PC-3 (cell line): ENCODE measurements at regions of chr13 and their contacts with region 1.

Region 1: GRCh38 chr13:106536244-106537034 is 977 bp upstream of the EFNB2 start:
- DNase-seq: peak; percentile 85
- ATAC-seq: peak; percentile 27
- H3K4me3 ChIP-seq: peak overlapping the region; percentile 79
- H3K27ac ChIP-seq: no peak overlapping the region
- H3K4me1 ChIP-seq: peaks cover 6% of the 10 kb centered on the region; the same call in 1 of the 2 replicates
- H3K27me3 ChIP-seq: no peaks in the 10 kb centered on the region
- CTCF ChIP-seq: peak; percentile 89

Region 2: DNA sequence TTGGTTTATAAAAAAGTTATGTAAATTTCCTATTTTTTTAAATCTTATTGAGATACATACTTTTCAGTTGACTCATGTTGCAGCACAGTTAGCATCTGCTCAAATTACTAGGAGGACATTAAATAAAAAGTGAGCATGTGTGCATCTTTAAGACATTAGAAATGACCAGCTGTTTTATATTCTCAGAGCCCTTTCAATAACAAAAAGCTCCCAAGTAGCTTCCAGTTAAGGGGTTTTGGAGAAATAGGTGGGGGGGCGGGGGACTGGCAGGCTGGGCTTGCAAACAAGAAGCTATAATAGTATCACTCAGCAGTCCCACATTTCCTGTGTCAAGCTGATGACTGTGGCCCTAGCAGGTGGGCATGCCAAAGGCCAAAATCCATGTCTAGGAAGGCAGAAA is 1757.1 kb before region 1 on chr13:
- CTCF ChIA-PET with region 1: no interaction called
- POLR2A ChIA-PET with region 1: no interaction called
- intact Hi-C with region 1: loop called (anchors 2 kb)
- DNase-seq: peak; percentile 36
- ATAC-seq: peak; percentile 83
- H3K4me3 ChIP-seq: no peak overlapping the region
- H3K27ac ChIP-seq: no peak overlapping the region
- H3K4me1 ChIP-seq: peaks cover 10% of the 10 kb centered on the region; the same call in 1 of the 2 replicates
- H3K27me3 ChIP-seq: no peaks in the 10 kb centered on the region
- CTCF ChIP-seq: no peak

Region 3: DNA sequence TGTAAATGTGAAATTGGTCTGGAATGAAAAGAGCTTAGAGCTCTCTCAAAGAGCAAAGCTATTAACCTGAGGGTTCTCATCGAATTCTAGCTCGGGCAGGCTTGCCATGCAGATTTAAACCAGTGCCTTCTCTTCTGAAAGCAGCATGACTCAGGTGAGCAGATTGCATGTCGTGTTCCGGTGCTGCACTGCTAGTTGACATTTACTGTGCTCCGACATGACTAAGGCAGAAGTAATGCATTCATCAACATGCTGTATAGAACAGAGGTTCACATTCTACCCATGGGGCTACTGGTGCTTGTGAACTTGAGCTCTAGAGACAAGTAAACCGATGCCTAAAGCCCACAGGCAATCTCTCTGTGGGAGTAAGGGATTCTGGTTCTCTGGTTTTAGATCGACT is 948.7 kb before region 1 on chr13:
- CTCF ChIA-PET with region 1: no interaction called
- POLR2A ChIA-PET with region 1: no interaction called
- intact Hi-C with region 1: loop called (anchors 10 kb)
- DNase-seq: peak; percentile 91
- ATAC-seq: peak; percentile 100
- H3K4me3 ChIP-seq: no peak overlapping the region
- H3K27ac ChIP-seq: peak overlapping the region; percentile 57
- H3K4me1 ChIP-seq: peaks cover 13% of the 10 kb centered on the region
- H3K27me3 ChIP-seq: no peaks in the 10 kb centered on the region
- CTCF ChIP-seq: no peak

Region 4: GRCh38 chr13:106083620-106084350 is 452.7 kb before region 1 on chr13:
- CTCF ChIA-PET with region 1: no interaction called
- POLR2A ChIA-PET with region 1: no interaction called
- intact Hi-C with region 1: loop called (anchors 5 kb)
- DNase-seq: peak; percentile 72
- ATAC-seq: peak; percentile 67
- H3K4me3 ChIP-seq: no peak overlapping the region
- H3K27ac ChIP-seq: 0 out of 2 replicates have a peak overlapping the region, but pooled peaks have one; percentile 4
- H3K4me1 ChIP-seq: peaks cover 13% of the 10 kb centered on the region
- H3K27me3 ChIP-seq: no peaks in the 10 kb centered on the region
- CTCF ChIP-seq: peak; percentile 83

Region 5: GRCh38 chr13:106143930-106144709 is 392.3 kb before region 1 on chr13:
- CTCF ChIA-PET with region 1: no interaction called
- POLR2A ChIA-PET with region 1: no interaction called
- intact Hi-C with region 1: loop called (anchors 2 kb)
- DNase-seq: peak; percentile 88
- ATAC-seq: peak; percentile 48
- H3K4me3 ChIP-seq: no peak overlapping the region
- H3K27ac ChIP-seq: peak overlapping the region; percentile 88
- H3K4me1 ChIP-seq: peaks cover 41% of the 10 kb centered on the region
- H3K27me3 ChIP-seq: no peaks in the 10 kb centered on the region
- CTCF ChIP-seq: no peak

Region 6: GRCh38 chr13:106525863-106526262 is 10.6 kb before region 1 on chr13:
- CTCF ChIA-PET with region 1: no interaction called
- POLR2A ChIA-PET with region 1: no interaction called
- intact Hi-C with region 1: no loop called
- DNase-seq: no peak
- ATAC-seq: no peak
- H3K4me3 ChIP-seq: no peak overlapping the region
- H3K27ac ChIP-seq: no peak overlapping the region
- H3K4me1 ChIP-seq: peaks cover 51% of the 10 kb centered on the region
- H3K27me3 ChIP-seq: no peaks in the 10 kb centered on the region
- CTCF ChIP-seq: no peak

Region 7: GRCh38 chr13:106917673-106918556 is 381.5 kb after region 1 on chr13:
- CTCF ChIA-PET with region 1: no interaction called
- POLR2A ChIA-PET with region 1: no interaction called
- intact Hi-C with region 1: loop called (anchors 5 kb)
- DNase-seq: peak; percentile 61
- ATAC-seq: peak; percentile 98
- H3K4me3 ChIP-seq: peak overlapping the region; percentile 70
- H3K27ac ChIP-seq: no peak overlapping the region
- H3K4me1 ChIP-seq: no peaks in the 10 kb centered on the region
- H3K27me3 ChIP-seq: no peaks in the 10 kb centered on the region
- CTCF ChIP-seq: peak; percentile 86